PC-9 (cell line): ENCODE measurements at regions of chr17 and their contacts with region 1.

Region 1: GRCh38 chr17:32215696-32216095 is 49.9 kb upstream of the RHBDL3 start:
- DNase-seq: no peak
- H3K4me3 ChIP-seq: no peak overlapping the region
- H3K27ac ChIP-seq: no peak overlapping the region
- H3K4me1 ChIP-seq: no peaks in the 10 kb centered on the region
- H3K27me3 ChIP-seq: no peaks in the 10 kb centered on the region
- CTCF ChIP-seq: no peak

Region 2: DNA sequence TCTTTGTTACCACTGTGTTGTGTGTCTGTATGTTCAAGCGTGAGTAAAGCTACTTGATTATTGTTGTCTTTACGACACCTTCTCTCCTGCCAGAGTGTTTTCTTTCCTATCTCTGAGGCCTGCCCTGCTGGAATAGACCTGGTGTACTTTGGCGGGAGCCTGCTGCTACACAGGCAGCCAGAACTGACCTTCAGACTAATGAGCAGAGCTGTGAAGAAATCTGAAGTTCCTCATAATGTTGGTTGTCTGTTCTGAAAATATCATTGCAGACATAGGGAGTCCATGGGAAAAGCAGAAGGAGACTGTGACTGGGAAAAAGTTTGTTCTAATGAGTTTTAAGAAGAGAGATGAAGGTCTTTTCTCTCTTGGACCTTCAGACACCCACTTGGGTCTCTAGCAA is 63.6 kb before region 1 on chr17:
- CTCF ChIA-PET with region 1: no interaction called
- POLR2A ChIA-PET with region 1: interaction called, 21 read pairs
- intact Hi-C with region 1: no loop called
- DNase-seq: no peak
- H3K4me3 ChIP-seq: no peak overlapping the region
- H3K27ac ChIP-seq: no peak overlapping the region
- H3K4me1 ChIP-seq: no peaks in the 10 kb centered on the region
- H3K27me3 ChIP-seq: no peaks in the 10 kb centered on the region
- CTCF ChIP-seq: no peak

Region 3: GRCh38 chr17:32283745-32284201 is 68.1 kb after region 1 on chr17:
- CTCF ChIA-PET with region 1: no interaction called
- POLR2A ChIA-PET with region 1: no interaction called
- intact Hi-C with region 1: no loop called
- DNase-seq: no peak
- H3K4me3 ChIP-seq: no peak overlapping the region
- H3K27ac ChIP-seq: no peak overlapping the region
- H3K4me1 ChIP-seq: no peaks in the 10 kb centered on the region
- H3K27me3 ChIP-seq: no peaks in the 10 kb centered on the region
- CTCF ChIP-seq: no peak

Region 4: GRCh38 chr17:32298298-32298697 is 82.6 kb after region 1 on chr17:
- CTCF ChIA-PET with region 1: no interaction called
- POLR2A ChIA-PET with region 1: no interaction called
- intact Hi-C with region 1: no loop called
- DNase-seq: no peak
- H3K4me3 ChIP-seq: no peak overlapping the region
- H3K27ac ChIP-seq: no peak overlapping the region
- H3K4me1 ChIP-seq: no peaks in the 10 kb centered on the region
- H3K27me3 ChIP-seq: 0 out of 2 replicates have a peak, but pooled peaks cover 6% of the 10 kb centered on the region
- CTCF ChIP-seq: no peak